ENCODE measurements at regions of chr19 and their contacts with region 1.

Region 1: DNA sequence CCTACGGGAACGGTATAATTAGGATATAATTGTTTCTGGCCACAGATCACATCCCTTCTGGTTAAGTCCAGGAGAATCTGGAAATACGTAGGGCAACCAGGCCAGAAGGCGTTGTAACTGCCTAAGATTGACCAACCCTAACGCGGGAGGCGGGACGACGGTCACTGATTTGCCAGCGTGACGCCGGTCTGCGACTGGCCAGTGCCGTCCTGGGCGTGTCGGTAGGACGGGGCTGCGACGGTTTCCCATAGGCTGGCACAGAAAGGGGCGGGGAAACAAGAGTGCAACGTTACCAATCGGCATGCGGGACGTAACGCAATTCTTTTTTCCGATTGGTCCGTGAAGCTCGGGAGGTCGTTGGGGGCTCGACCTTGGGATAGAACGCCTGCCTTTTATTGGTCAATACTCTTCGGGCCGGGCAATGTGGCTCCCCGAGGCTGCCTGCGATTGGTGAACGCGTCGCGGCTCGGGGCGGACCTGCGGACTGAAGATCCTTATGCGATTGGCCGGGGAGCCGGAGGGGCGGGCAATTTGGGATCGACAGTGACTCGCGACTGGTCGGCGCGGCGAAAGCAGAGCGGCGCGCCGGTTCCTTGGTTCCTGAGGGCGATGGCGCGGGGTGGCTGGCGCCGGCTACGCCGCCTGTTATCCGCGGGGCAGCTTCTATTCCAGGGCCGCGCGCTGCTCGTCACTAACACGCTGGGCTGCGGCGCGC is at the start of gene MPV17L2:
- DNase-seq: peak; percentile 100
- H3K4me3 Mint-ChIP-seq: peak within 1 kb of the TSS; percentile 78
- H3K27ac Mint-ChIP-seq: peak within 1 kb of the TSS; percentile 72
- H3K4me1 Mint-ChIP-seq: peaks cover 12% of the 10 kb centered on the region
- H3K27me3 Mint-ChIP-seq: no peaks in the 10 kb centered on the region
- CTCF ChIP-seq: no peak
- total RNA-seq, gene MPV17L2: 12.9 and 15.4 TPM in 2 replicates

Region 2: GRCh38 chr19:18117692-18118378 is 75.0 kb before region 1 on chr19:
- CTCF ChIA-PET with region 1: interaction called, 3 read pairs
- POLR2A ChIA-PET with region 1: interaction called, 13 read pairs
- intact Hi-C with region 1: no loop called
- DNase-seq: peak; percentile 70
- H3K4me3 Mint-ChIP-seq: peak overlapping the region; percentile 77
- H3K27ac Mint-ChIP-seq: peak overlapping the region; percentile 63
- H3K4me1 Mint-ChIP-seq: peaks cover 15% of the 10 kb centered on the region
- H3K27me3 Mint-ChIP-seq: no peaks in the 10 kb centered on the region
- CTCF ChIP-seq: no peak

Region 3: GRCh38 chr19:18128044-18128443 is 64.8 kb before region 1 on chr19:
- CTCF ChIA-PET with region 1: no interaction called
- POLR2A ChIA-PET with region 1: no interaction called
- intact Hi-C with region 1: no loop called
- DNase-seq: no peak
- H3K4me3 Mint-ChIP-seq: no peak overlapping the region
- H3K27ac Mint-ChIP-seq: no peak overlapping the region
- H3K4me1 Mint-ChIP-seq: no peaks in the 10 kb centered on the region
- H3K27me3 Mint-ChIP-seq: no peaks in the 10 kb centered on the region
- CTCF ChIP-seq: no peak

Region 4: GRCh38 chr19:18167975-18168645 is 24.7 kb before region 1 on chr19:
- CTCF ChIA-PET with region 1: interaction called, 5 read pairs
- POLR2A ChIA-PET with region 1: interaction called, 11 read pairs
- intact Hi-C with region 1: no loop called
- DNase-seq: peak; percentile 51
- H3K4me3 Mint-ChIP-seq: no peak overlapping the region
- H3K27ac Mint-ChIP-seq: no peak overlapping the region
- H3K4me1 Mint-ChIP-seq: peaks cover under 1% of the 10 kb centered on the region
- H3K27me3 Mint-ChIP-seq: no peaks in the 10 kb centered on the region
- CTCF ChIP-seq: peak; percentile 76

Region 5: DNA sequence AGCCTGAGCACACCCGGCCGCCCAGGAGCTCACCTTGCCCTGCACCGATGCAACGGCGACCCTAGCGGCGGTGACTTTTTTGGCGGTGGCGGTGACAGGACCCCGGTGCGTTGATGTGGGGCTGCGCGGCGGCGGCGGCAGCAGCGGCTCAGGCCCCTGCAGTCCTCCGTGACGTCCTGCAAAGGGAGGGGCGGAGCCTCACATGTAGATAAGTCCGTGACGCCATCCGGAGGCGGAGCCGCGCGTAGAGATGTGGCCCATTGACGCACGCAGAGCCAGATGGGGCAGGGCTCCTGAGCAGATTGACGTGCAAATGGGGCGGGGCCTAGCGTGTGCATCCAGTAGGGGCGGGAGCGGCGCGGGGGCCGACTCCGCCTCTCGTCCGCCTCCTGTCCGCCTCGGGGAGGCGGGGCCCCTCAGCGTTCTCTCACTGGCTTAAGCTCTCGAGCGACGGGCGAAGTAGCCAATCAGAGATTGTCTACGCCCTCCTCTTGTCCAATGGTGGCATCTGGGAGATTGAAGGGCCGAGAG is 11.1 kb after region 1 on chr19 and contains the start of gene RAB3A:
- CTCF ChIA-PET with region 1: interaction called, 4 read pairs
- POLR2A ChIA-PET with region 1: interaction called, 147 read pairs
- intact Hi-C with region 1: no loop called
- DNase-seq: peak; percentile 100
- H3K4me3 Mint-ChIP-seq: peak within 1 kb of the TSS; percentile 95
- H3K27ac Mint-ChIP-seq: peak within 1 kb of the TSS; percentile 95
- H3K4me1 Mint-ChIP-seq: peaks cover 5% of the 10 kb centered on the region
- H3K27me3 Mint-ChIP-seq: no peaks in the 10 kb centered on the region
- CTCF ChIP-seq: no peak
- total RNA-seq, gene RAB3A: 0.68 and 0.81 TPM in 2 replicates

Region 6: GRCh38 chr19:18214779-18215433 is 22.1 kb after region 1 on chr19:
- CTCF ChIA-PET with region 1: no interaction called
- POLR2A ChIA-PET with region 1: no interaction called
- intact Hi-C with region 1: no loop called
- DNase-seq: peak; percentile 45
- H3K4me3 Mint-ChIP-seq: no peak overlapping the region
- H3K27ac Mint-ChIP-seq: no peak overlapping the region
- H3K4me1 Mint-ChIP-seq: peaks cover 6% of the 10 kb centered on the region
- H3K27me3 Mint-ChIP-seq: peaks cover 6% of the 10 kb centered on the region
- CTCF ChIP-seq: no peak

Region 7: DNA sequence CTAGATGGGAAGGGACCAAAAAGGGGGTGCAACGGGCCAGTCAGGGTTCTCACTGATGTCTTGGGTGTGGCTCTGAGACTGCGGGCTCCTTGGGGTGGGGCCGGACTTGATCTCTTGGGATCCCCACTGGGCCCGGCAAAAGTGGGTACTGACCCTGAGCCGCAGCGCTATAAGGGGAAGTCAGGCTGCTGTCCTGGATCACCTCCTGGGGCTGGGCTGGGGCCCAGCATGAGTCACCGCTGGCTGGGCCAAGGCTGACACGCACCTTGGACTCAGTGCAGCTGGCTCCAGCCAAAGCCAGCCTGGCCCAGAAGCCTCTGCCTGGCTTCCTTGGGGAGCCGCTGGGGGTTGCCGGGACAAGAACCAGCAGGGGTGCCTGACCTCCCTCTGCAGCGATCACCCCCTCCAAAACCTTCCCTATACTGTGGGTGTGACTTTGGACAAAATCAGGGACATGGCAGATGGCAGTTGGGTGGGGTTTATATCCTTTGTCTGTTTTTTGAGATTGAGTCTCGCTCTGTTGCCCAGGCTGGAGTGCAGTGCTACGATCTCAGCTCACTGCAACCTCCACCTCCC is 82.0 kb after region 1 on chr19:
- CTCF ChIA-PET with region 1: interaction called, 5 read pairs
- POLR2A ChIA-PET with region 1: interaction called, 67 read pairs
- intact Hi-C with region 1: no loop called
- DNase-seq: peak; percentile 94
- H3K4me3 Mint-ChIP-seq: peak overlapping the region; percentile 38
- H3K27ac Mint-ChIP-seq: peak overlapping the region; percentile 79
- H3K4me1 Mint-ChIP-seq: peaks cover 23% of the 10 kb centered on the region
- H3K27me3 Mint-ChIP-seq: no peaks in the 10 kb centered on the region
- CTCF ChIP-seq: peak; percentile 3

Region 8: GRCh38 chr19:18322759-18323460 is 130.1 kb after region 1 on chr19 and contains the start of gene LSM4:
- CTCF ChIA-PET with region 1: interaction called, 5 read pairs
- POLR2A ChIA-PET with region 1: interaction called, 24 read pairs
- intact Hi-C with region 1: loop called (anchors 1 kb)
- DNase-seq: peak; percentile 99
- H3K4me3 Mint-ChIP-seq: peak within 1 kb of the TSS; percentile 83
- H3K27ac Mint-ChIP-seq: peak within 1 kb of the TSS; percentile 91
- H3K4me1 Mint-ChIP-seq: peaks cover 33% of the 10 kb centered on the region
- H3K27me3 Mint-ChIP-seq: no peaks in the 10 kb centered on the region
- CTCF ChIP-seq: peak; percentile 38
- total RNA-seq, gene LSM4: 172 and 193 TPM in 2 replicates

Region 9: DNA sequence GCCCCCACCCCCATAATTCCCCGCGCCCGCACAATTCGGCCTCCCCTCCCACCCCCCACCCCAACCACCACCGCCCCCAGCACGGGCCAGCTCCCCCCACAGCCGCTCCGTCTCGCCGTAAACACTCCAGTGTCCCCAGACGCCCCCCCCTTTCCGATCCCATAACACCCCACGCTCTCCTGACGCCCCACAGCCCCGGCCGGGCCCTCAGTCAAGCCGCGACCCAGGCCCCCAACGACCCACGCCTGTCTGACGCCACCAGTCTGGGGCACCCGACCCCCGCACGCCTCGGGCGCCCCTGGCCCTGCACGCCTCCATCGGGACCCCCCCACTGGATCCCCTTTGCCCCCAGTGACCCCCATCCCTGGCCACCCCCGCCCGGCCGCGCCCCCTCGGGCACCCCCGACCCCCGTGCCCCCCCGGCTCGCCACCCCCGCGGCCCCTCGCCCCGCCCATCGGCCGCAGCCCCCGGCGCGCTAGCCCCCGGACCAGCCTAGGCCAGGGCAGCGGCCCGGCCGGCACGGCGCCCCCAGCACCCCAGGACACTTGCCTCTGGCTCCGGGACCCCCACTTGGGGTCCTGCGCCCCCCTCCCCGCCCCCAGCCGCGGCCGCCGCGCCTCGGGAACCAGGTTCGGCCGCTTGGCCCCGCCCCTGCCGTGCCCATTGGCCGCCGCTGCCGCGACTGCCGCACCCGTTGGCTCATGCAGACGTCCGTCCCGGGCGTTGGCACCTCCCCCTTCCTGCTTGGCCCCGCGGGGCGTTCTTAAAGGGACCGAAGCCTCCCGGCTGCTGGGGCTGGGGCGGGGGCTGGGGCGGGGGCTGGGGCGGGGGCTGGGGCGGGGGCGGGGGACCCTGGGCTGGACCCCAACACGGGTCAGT is 350.3 kb after region 1 on chr19 and contains the start of gene FKBP8:
- CTCF ChIA-PET with region 1: no interaction called
- POLR2A ChIA-PET with region 1: no interaction called
- intact Hi-C with region 1: no loop called
- DNase-seq: peak; percentile 87
- H3K4me3 Mint-ChIP-seq: peak within 1 kb of the TSS; percentile 87
- H3K27ac Mint-ChIP-seq: peak within 1 kb of the TSS; percentile 94
- H3K4me1 Mint-ChIP-seq: peaks cover 8% of the 10 kb centered on the region
- H3K27me3 Mint-ChIP-seq: no peaks in the 10 kb centered on the region
- CTCF ChIP-seq: no peak
- total RNA-seq, gene FKBP8: 142 and 154 TPM in 2 replicates

Measured in MCF 10A (cell line).